ENCODE measurements at regions of chr20 and their contacts with region 1.

Region 1: GRCh38 chr20:20452254-20452676 is 84.4 kb downstream of the INSM1 start:
- DNase-seq: peak; percentile 86 to 99 (median 94)

Region 2: DNA sequence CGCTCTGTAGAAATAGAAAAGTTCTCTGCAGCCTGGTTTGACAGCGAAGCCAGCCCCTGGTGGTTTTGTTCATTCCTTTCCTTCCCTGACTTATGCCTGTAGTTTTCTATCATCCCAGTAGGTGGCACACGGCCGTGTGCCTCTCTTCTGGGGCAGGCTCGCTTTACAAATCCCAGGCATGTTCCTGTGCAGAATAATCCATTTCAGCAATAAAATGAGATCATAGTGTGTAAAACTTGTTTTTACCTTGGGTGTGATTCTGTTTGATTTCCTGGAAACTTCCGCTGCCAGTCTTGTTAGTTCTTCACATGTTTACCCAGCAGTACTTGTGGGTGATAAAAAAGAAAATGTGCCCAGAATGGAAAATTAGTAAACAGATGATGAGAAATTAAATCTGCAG is 91.8 kb before region 1 on chr20:
- intact Hi-C with region 1: loop called (anchors 5 kb)
- DNase-seq: peak in 6 of 10 donors; percentile 32 to 86 (median 52)

Region 3: GRCh38 chr20:20498076-20498861 is 46.0 kb after region 1 on chr20:
- intact Hi-C with region 1: loop called (anchors 5 kb)
- DNase-seq: peak; percentile 18 to 88 (median 42)

Region 4: GRCh38 chr20:20637998-20638725 is 185.9 kb after region 1 on chr20:
- intact Hi-C with region 1: no loop called
- DNase-seq: no peak

Measured in posterior cingulate gyrus (tissue), 11 donors.